ENCODE measurements at regions of chr17 and their contacts with region 1.

Region 1: GRCh38 chr17:32755045-32755805 is 121.7 kb downstream of the MYO1D start:
- DNase-seq: no peak
- ATAC-seq: peak; percentile 65 to 73
- H3K4me3 ChIP-seq: no peak overlapping the region
- H3K27ac ChIP-seq: no peak overlapping the region
- H3K4me1 ChIP-seq: no peaks in the 10 kb centered on the region
- H3K27me3 ChIP-seq: no peaks in the 10 kb centered on the region

Region 2: DNA sequence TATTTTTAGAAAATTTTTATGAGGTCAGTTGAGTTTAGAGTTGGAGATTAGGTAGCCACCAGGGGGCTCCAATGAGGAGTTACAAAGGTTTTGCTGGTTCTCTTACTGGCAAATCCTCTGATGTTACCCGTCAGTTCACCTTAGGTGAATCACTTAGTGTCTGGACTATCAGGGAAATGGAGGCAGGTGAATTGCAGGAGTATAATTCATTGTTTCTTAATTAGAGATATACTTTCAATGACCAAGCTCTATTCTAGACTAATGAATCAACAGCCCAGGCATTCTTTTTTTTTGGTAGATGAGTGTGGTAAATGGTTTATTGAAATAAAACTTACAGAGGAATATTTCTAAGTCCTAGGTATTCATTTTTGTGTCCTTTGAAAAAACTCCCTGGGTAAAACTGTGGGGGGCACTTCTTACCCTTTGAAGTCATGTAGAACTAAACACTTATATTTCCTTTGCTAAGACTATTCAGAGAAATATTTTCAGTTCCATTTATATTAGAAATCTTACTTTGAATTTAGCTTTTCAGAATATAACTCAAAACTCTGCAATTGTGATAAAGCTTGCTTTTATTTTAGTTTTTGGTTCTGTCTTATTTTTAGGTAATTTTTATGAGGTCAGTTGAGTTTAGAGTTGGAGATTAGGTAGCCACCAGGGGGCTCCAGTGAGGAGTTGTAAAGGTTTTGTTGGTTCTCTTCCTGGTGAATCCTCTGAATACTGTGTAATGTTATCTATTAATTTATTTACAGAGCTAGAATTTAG is 293.2 kb before region 1 on chr17:
- intact Hi-C with region 1: loop called in 1 of 4 experiments (anchors 10 kb)
- DNase-seq: peak in 2 of 3 donors; percentile 39 to 59
- ATAC-seq: peak; percentile 49 to 52
- H3K4me3 ChIP-seq: no peak overlapping the region
- H3K27ac ChIP-seq: no peak overlapping the region
- H3K4me1 ChIP-seq: no peaks in the 10 kb centered on the region
- H3K27me3 ChIP-seq: no peaks in the 10 kb centered on the region

Region 3: DNA sequence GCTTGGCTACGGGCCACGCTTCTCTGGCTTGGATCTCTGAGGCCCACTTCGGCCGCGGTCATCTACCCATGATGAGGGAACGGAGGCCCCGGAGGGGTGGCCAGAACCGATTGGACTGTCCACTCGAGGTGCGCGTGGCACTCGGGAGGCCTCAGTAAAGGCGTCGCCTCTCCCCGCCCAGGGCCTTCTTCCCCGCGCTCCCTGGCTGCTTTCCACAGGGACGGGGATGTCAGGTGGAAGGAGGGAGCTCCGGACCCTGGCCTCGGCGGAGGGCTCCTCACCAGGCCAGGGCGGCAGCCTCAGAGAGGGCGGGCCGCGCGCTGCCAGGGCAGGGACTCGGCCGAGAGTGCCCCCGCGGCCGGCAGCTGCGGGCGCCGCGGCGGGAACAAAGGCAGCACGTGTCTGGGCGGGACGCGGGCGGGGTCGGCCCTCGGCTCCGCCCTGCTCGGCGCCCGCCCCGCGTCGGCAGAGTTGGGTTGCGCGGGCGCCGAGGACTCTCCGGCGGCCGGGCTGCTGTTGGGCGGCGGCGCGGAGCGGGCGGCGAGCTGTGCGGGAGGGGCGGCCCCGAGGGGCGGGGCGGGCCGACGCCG is 269.0 kb before region 1 on chr17:
- intact Hi-C with region 1: loop called in 2 of 4 experiments (anchors 5 to 10 kb)
- DNase-seq: peak; percentile 74 to 90 (median 89)
- ATAC-seq: peak; percentile 82 to 83
- H3K4me3 ChIP-seq: peak overlapping the region; percentile 96
- H3K27ac ChIP-seq: peak overlapping the region; percentile 74
- H3K4me1 ChIP-seq: peaks cover 6% of the 10 kb centered on the region
- H3K27me3 ChIP-seq: no peaks in the 10 kb centered on the region

Region 4: GRCh38 chr17:32659419-32659842 is 95.8 kb before region 1 on chr17:
- intact Hi-C with region 1: loop called in 1 of 4 experiments (anchors 5 kb)
- DNase-seq: peak; percentile 47 to 90 (median 83)
- ATAC-seq: peak; percentile 77 to 79
- H3K4me3 ChIP-seq: no peak overlapping the region
- H3K27ac ChIP-seq: no peak overlapping the region
- H3K4me1 ChIP-seq: no peaks in the 10 kb centered on the region
- H3K27me3 ChIP-seq: no peaks in the 10 kb centered on the region

Region 5: DNA sequence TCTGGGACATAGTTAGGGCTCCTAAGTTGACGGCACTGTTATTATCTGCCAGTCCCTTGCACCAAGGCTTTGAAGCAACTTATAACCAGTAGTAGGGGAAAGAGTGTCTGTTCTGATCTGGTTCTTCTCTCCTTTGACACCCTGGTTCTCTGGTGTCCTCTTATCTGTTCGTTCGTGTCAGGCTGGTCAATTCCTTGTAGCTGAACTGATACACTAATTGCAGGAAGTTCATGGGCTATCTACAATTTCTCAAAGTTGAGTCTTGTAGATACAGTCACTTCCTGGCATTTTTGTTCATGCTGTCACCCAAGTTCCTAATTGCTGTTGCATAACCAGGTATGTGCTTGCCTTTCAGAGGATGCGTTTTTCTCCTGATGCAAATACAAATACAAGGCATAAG is 139.0 kb after region 1 on chr17:
- intact Hi-C with region 1: no loop called
- DNase-seq: no peak
- ATAC-seq: no peak
- H3K4me3 ChIP-seq: no peak overlapping the region
- H3K27ac ChIP-seq: no peak overlapping the region
- H3K4me1 ChIP-seq: no peaks in the 10 kb centered on the region
- H3K27me3 ChIP-seq: no peaks in the 10 kb centered on the region

Measured in right cardiac atrium (tissue), 5 donors.